ENCODE measurements at regions of chr1 and their contacts with region 1.

Region 1: DNA sequence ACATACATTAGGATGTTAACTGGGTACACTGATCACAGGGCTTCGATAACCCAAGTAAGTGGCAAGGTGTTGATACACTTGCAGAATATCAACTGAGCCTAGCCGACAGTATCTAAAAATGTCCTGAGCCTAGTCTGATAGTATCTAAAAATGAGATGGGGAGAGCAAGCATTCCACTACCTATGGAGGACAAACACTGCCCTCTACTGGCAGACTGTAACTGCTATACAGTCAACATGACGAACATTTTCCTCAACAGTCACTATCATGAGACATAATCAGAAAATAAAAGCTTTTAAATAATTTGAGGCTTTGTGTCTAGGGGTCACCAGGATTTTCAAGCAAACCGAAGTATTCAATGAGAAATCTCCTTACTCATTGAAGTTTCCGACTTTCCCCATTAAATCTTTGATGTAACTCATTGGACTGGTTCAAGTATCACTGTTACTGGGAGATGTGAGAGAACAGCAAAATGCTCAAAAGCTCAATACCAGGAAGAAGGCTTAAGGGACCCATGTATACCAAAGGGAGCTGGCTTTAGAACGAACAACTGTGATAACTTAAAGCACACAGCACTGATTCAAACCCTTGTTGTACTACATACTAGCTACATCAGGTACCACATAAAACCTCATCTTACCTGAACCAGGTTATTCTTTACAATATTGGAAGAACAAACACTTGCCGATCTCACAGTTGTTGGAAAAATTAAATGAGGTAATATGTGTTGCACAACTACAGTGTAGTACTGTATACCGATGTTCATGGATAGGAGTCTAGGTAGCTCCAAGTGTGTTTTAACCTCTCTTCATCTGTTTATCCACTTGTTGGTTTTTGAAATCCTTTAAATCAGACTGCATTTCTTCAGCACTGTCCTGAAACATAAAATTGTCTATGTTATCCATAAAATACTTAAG is 31.1 kb upstream of the SLC45A3 start:
- DNase-seq: peak; percentile 56
- ATAC-seq: peak; percentile 80 to 83

Region 2: DNA sequence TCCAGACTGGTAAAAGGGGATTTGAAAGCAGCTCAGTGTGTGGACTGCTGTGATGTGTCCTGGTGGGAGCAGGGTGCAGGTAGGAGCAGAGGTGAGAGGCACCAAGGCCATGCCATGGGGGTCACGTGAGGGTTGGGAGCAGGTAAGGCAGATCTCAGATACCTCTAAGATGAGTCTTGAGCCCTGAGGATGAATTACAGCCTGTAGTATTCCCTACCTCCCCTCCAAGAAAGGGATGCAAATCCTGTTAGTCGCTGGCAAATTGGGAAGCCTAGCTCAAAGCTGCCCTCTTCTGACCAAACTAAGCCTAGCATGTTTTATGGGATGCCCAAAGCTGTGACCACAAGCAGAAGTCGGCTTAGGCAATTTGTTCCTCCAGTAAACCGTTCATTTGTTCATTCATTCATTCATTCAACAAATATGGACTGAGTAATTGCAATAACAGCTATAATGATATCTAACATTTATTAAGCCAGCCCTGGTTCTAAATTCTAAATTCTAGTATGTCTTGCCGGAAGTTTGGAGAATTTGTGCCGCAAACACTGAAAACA is 386.0 kb before region 1 on chr1:
- intact Hi-C with region 1: no loop called
- DNase-seq: no peak
- ATAC-seq: peak in 1 of 2 donors; percentile 10

Region 3: GRCh38 chr1:205616563-205617293 is 94.6 kb before region 1 on chr1:
- intact Hi-C with region 1: no loop called
- DNase-seq: no peak
- ATAC-seq: no peak

Region 4: GRCh38 chr1:205668951-205669340 is 42.4 kb before region 1 on chr1:
- intact Hi-C with region 1: loop called in 1 of 2 experiments (anchors 10 kb)
- DNase-seq: no peak
- ATAC-seq: peak in 1 of 2 donors; percentile 21

Region 5: DNA sequence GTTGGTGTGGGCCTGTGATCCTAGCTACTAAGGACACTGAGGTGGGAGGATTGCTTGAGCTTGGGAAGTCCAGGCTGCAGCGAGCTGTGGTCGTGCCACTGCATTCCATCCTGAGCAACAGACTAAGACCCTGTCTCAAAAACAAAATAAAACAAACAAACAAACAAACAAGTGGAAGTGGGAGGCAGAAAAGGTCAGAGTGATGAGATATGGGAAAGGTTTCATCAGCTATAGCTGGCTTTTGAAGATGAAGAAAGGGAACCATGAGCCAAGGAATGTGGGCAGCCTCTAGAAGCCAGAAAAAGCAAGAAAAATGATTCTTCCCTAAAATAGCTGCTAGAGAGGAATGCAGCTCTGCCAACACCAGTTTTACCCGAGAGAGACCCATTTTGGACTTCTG is 49.2 kb after region 1 on chr1:
- intact Hi-C with region 1: no loop called
- DNase-seq: no peak
- ATAC-seq: no peak